ENCODE measurements at regions of chr10 and their contacts with region 1.

Region 1: GRCh38 chr10:14878266-14879054 is at the start of gene SUV39H2:
- DNase-seq: peak; percentile 96
- H3K4me3 Mint-ChIP-seq: peak within 1 kb of the TSS; percentile 95
- H3K27ac Mint-ChIP-seq: peak within 1 kb of the TSS; percentile 82
- H3K4me1 Mint-ChIP-seq: peaks cover 56% of the 10 kb centered on the region
- H3K27me3 Mint-ChIP-seq: no peaks in the 10 kb centered on the region
- total RNA-seq, gene SUV39H2: 24.5 to 25.2 TPM

Region 2: GRCh38 chr10:14598809-14599764 is 279.4 kb before region 1 on chr10:
- CTCF ChIA-PET with region 1: no interaction called
- POLR2A ChIA-PET with region 1: no interaction called
- DNase-seq: no peak
- H3K4me3 Mint-ChIP-seq: no peak overlapping the region
- H3K27ac Mint-ChIP-seq: peak overlapping the region; percentile 49
- H3K4me1 Mint-ChIP-seq: peaks cover 70% of the 10 kb centered on the region
- H3K27me3 Mint-ChIP-seq: no peaks in the 10 kb centered on the region

Region 3: DNA sequence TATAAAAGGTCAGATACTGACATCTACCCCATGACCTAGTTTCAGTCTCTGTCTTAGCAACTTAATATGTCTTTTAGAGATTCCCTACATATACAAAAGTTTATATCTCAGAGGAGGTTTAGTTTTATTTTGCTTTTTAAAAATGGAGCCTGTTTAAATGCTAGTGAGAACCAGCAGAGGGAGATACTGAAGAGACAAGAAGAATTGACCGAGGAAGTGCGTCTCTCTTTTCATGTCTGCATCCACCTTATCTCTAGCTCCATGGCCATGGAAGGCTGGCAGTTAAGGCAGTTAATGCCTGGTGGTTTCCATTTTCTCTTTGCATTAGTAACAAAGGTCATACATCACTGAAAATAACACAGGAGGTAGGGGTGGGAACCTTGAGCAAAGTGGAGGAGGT is 10.9 kb after region 1 on chr10:
- CTCF ChIA-PET with region 1: interaction called, 12 read pairs
- POLR2A ChIA-PET with region 1: interaction called, 12 read pairs
- DNase-seq: no peak
- H3K4me3 Mint-ChIP-seq: no peak overlapping the region
- H3K27ac Mint-ChIP-seq: no peak overlapping the region
- H3K4me1 Mint-ChIP-seq: peaks cover 8% of the 10 kb centered on the region
- H3K27me3 Mint-ChIP-seq: no peaks in the 10 kb centered on the region

Region 4: GRCh38 chr10:14911801-14912200 is 33.3 kb after region 1 on chr10:
- CTCF ChIA-PET with region 1: no interaction called
- POLR2A ChIA-PET with region 1: no interaction called
- DNase-seq: no peak
- H3K4me3 Mint-ChIP-seq: no peak overlapping the region
- H3K27ac Mint-ChIP-seq: no peak overlapping the region
- H3K4me1 Mint-ChIP-seq: peaks cover 16% of the 10 kb centered on the region
- H3K27me3 Mint-ChIP-seq: no peaks in the 10 kb centered on the region

Region 5: DNA sequence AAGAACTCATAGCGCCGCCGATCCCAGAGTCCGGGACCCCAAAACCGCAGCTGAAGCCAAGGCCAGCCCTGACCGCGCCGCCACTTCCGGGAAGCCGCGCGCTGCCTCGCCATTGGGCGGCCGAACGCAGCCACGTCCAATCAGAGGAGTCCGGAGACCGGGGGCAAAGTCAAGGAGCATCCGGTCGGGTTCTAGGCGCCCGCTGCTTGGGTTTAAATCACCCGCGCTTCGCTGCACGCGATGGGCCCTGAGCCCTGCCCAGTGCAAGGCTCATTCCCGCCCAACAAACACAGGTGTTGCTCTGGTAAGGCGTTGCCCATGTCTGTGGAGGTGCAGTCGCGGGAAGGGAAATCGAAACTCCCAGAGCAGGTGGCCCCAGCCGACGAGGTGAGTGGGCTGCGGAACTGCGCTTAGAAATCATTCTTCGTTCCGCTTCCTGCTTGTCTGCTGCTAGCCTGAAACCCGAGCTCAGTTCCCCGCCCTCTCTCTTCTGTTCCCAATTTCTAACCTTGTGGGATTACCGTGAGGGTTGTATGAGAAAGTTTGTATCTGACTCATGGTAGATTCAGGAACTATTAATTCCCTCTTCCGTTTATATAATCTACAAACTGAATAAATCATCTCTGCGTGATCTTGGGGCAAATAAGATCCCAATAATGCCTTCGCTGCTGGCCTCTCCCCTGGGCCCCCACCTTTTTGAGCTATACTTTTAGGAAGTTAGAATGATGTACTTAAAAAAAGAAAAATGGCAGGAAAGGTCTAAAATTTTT is 75.7 kb after region 1 on chr10 and contains the start of gene DCLRE1C:
- CTCF ChIA-PET with region 1: interaction called, 6 read pairs
- POLR2A ChIA-PET with region 1: interaction called, 32 read pairs
- DNase-seq: peak; percentile 93
- H3K4me3 Mint-ChIP-seq: peak within 1 kb of the TSS; percentile 87
- H3K27ac Mint-ChIP-seq: peak within 1 kb of the TSS; percentile 93
- H3K4me1 Mint-ChIP-seq: peaks cover 64% of the 10 kb centered on the region
- H3K27me3 Mint-ChIP-seq: no peaks in the 10 kb centered on the region
- total RNA-seq, gene DCLRE1C: 36.8 to 40.4 TPM

Region 6: GRCh38 chr10:14959276-14960057 is 81.0 kb after region 1 on chr10 and contains the start of gene MEIG1:
- CTCF ChIA-PET with region 1: interaction called, 3 read pairs
- POLR2A ChIA-PET with region 1: interaction called, 32 read pairs
- DNase-seq: peak; percentile 92
- H3K4me3 Mint-ChIP-seq: peak within 1 kb of the TSS; percentile 88
- H3K27ac Mint-ChIP-seq: peak within 1 kb of the TSS; percentile 96
- H3K4me1 Mint-ChIP-seq: peaks cover 42% of the 10 kb centered on the region
- H3K27me3 Mint-ChIP-seq: no peaks in the 10 kb centered on the region
- total RNA-seq, gene MEIG1: 0.75 to 1.3 TPM